GM10248 (cell line): ENCODE measurements at regions of chr1 and their contacts with region 1.

Region 1: GRCh38 chr1:145858894-145859490 is at the start of gene PIAS3:
- DNase-seq: peak; percentile 97
- CTCF ChIP-seq: no peak

Region 2: DNA sequence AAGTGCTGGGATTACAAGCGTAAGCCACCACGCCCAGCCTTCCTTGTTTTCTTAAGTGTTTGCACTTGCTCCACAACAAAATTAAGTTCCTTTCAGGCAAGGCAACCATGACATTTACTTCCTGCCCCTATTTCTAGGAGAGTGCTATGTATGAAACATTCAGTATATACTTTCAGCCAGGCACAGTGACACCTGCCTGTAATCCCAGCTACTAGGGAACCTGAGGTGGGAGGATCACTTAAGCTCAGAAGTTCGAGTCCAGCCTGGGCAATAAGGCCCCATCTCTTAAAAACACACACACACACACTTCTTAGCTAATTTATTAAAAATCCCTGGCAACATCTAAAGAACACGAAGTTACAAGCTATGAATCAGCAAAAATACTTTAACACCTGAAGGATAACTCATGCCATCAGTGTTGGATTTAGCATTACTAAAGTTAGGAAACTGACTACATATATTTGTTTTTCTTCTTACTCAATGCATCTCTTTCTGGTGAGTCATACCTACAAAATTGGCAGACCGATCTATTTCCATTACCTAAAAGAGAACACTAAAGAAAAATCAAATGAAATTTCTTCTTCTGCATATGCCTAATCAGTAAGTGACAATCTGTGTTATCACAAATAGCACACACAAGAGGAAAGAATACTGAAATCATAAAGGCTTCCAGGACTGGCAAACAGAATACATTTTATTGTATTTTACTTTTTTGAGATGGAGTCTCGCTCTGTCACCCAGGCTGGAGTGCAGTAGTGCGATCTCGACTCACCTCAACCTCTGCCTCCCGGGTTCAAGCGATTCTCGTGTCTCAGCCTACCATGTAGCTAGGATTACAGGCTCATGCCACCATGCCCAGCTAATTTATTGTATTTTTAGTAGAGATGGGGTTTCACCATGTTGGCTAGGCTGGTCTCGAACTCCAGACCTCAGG is 76.6 kb before region 1 on chr1:
- CTCF ChIA-PET with region 1: no interaction called
- POLR2A ChIA-PET with region 1: no interaction called
- DNase-seq: no peak
- CTCF ChIP-seq: no peak

Region 3: DNA sequence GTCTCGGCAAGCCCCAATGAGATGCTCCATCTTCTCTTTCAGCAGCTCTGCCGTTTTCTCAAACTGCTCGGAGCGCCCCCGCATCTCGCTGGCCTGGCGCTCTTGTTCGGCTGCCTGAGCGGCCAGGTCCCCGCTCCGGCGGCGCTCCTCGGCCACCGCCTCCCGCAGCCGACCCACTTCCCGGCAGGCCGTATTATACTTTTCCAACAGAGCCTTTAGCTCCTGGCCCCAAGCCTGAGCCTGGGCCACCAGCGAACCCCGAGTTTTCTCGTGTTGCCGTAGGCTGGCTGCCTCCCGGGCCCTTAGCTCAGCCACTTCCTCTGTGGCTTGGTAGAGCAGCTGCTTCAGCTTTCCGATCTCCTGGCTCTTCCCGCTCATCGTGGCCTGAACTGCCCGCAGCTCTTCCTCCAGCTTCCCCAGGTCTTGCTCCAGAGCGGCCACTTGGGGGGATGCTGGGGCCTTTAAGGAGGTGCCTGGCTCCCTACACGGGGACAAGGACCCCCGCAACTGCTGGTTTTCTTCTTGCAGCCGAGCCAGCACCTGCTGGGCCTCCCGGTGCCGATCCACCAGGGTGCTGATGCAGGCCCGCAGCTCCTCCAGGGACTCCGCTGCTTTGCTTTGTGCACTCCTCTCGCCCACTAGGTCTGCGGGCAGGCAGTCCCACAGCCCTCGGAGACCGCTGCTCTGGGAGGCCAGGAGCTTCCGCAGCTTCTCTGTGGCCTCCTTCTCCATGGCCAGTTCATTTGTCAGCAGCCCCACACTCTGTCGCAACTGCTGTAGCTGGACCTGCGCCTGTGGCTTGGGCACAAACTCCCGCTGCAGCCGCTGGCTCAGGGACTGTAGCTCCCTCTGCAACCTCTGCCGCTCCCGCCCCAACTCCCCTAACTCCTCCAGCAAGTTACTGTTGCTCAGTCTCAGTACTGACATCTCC is 13.3 kb after region 1 on chr1:
- CTCF ChIA-PET with region 1: interaction called, 17 read pairs
- POLR2A ChIA-PET with region 1: interaction called, 3 read pairs
- DNase-seq: peak; percentile 65
- CTCF ChIP-seq: no peak

Region 4: GRCh38 chr1:145879775-145880174 is 20.8 kb after region 1 on chr1:
- CTCF ChIA-PET with region 1: interaction called, 21 read pairs
- POLR2A ChIA-PET with region 1: no interaction called
- DNase-seq: no peak
- CTCF ChIP-seq: no peak

Region 5: DNA sequence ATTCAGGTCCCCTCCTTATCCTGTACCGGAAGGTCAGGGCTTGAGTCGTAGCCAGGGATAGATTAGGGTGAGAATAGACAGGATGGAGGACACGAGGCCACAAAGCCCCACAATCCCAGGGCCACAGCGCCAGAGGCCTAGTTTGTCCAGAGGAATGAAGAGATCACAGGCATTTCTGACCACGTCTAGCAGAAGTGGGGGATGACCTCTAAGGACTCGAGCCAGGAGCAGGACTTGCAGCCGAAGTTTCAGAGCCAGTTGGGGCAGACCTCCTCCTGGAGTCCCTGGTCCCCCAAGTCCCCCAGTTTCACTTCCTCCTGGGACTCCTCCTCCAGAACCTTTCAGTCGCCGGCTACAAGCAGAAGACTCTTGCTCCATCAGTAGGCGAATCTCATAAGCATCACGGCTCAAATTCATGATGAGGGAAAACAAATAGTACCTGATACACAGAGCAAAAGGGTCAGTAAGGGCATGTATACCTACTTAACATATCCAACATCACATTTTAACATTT is 53.2 kb after region 1 on chr1:
- CTCF ChIA-PET with region 1: interaction called, 15 read pairs
- POLR2A ChIA-PET with region 1: no interaction called
- DNase-seq: no peak
- CTCF ChIP-seq: no peak

Region 6: DNA sequence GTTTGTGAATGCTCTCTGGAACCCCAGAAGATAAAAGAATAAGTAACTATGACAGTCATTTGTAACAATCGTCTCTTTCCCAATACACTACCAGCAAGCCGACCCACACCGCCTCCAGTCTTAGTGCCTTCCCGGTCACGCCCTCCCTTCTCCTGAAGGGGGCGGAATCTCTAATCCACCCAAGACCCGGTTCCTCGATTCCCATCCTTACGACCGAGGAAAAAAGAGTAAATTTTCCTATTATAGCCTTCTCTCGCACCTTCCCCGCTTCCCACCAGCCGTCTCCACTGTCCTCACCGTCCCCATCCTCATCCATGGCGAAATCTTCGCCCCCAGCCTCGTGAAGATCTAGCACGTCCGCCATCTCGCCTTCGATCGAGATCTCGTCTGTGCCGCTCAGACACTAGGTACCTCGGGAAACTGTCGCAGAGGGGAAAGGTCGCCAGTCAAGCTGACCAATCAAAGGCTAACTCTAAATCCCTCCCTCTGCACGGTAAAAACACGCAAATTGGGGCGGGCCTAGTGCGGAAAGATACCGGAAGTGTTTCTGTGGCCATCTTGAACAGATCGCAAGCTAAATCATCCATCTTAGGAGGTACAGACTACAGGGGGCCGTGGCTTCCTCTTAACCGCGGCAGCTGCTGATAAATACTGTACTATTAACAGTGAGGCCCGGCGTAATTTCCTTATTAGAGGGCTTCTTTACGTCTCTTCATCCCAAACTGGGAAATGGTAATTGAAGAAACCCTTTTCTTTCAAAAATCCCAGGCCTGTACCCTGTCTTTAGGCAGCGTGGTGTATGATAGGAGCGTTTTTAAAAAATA is 68.3 kb after region 1 on chr1 and contains the start of gene RBM8A:
- CTCF ChIA-PET with region 1: interaction called, 3 read pairs
- POLR2A ChIA-PET with region 1: interaction called, 16 read pairs
- DNase-seq: peak; percentile 89
- CTCF ChIP-seq: peak; percentile 42

Region 7: DNA sequence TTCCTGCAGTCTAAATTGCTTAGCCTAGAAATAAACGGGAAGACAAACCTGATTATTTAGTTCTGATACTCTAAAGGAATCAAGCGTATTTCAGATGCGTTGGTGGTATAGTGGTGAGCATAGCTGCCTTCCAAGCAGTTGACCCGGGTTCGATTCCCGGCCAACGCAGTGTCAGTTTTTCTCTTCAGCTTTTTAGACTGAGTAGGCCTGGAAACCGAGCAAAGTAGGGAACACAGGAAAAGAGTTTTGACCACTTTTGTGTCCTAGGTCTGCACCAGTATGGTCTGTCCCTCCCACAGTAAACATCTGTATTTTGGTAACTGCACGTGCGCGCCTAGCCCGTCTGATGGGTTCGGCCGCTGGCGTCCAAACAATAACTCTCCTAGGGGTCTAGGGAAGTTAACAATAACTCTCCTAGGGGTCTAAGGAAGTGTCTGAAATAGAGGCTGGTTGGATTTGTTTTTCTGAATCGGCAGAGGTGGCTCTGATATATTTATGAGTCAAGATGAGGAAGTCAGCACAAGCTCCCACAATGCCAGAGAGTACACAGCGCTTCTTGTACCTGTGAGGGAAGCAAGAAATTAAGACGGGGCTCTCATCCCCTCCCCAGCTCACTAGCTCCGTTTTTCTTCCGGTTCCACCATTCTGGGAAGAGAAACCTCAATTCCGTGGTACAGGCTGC is 178.1 kb after region 1 on chr1:
- CTCF ChIA-PET with region 1: interaction called, 11 read pairs
- POLR2A ChIA-PET with region 1: interaction called, 4 read pairs
- DNase-seq: peak; percentile 58
- CTCF ChIP-seq: no peak

Region 8: DNA sequence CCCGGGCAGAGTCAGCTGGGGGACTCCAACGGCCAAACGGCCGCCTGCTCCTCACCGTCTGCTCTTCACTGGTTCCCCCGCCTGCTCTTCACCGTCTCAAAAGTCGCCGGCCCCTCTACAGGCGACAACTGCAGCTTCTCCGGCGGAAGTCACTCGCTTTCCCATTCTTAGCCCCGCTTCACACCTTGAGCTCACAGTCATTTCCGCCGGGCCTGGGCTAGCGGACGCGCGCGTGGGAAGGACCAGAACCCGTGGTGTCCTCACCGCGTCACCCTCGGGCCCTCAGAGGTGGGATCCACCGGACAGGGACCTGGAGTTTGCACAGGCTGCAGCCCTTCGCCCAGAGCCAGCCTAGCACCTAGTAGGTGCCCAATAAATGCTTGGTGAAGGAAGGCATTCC is 190.4 kb after region 1 on chr1:
- CTCF ChIA-PET with region 1: no interaction called
- POLR2A ChIA-PET with region 1: no interaction called
- DNase-seq: no peak
- CTCF ChIP-seq: no peak